Activated CD4-positive, alpha-beta memory T cell treated with anti-CD3 and anti-CD28 coated beads for 36 hours (primary cell): ENCODE measurements at regions of chr21 and their contacts with region 1.

Region 1: DNA sequence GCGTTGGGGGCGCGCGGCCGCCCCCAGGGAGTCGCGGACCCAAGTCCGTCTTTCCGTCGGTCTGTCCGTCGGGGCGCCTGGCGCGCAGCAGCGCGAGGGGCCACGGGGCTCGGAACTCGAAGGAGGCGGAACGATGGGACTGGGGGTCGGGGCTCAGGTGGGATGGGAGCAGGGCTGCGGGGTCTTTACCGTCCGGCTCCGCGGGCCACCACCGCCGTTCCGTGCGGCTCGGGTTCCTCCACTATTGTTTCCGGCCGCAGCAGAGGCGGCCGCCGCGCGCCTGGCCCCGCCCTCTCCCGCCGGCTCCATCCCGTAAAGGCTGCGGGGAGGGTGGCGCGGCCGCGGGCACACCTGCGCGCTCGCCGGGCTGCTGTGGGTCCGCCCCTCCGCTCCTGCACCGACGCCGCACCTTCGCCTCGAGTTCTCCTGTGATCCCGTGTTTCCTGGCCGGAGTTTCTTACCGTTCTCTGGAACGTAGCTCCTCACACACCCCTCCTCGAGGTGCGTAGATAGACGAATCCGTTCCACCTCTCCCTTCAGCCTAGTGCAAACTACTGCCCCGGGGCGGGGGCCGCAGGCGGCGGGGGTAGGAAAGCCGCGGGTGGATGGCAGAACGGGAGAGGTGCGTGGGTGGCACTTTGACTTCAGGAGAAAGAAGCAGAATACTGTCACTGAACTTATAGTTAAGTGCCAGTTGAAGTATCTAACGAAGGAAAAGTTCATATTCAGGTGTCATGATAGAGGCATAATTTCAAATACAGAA is at the start of gene C21orf91:
- DNase-seq: peak; percentile 92
- H3K4me3 Mint-ChIP-seq: peak within 1 kb of the TSS; percentile 84
- H3K27ac Mint-ChIP-seq: peak within 1 kb of the TSS; percentile 98
- H3K4me1 Mint-ChIP-seq: peaks cover 45% of the 10 kb centered on the region
- H3K27me3 Mint-ChIP-seq: no peaks in the 10 kb centered on the region
- total RNA-seq, gene C21orf91: 23.6 to 24.1 TPM

Region 2: GRCh38 chr21:17512253-17513213 is 306.8 kb before region 1 on chr21 and contains the start of gene CXADR:
- CTCF ChIA-PET with region 1: no interaction called
- POLR2A ChIA-PET with region 1: no interaction called
- intact Hi-C with region 1: loop called (anchors 5 kb)
- DNase-seq: peak; percentile 83
- H3K4me3 Mint-ChIP-seq: peak within 1 kb of the TSS; percentile 77
- H3K27ac Mint-ChIP-seq: no peak within 1 kb of the TSS
- H3K4me1 Mint-ChIP-seq: peaks cover 14% of the 10 kb centered on the region
- H3K27me3 Mint-ChIP-seq: peaks cover 14% of the 10 kb centered on the region
- total RNA-seq, gene CXADR: 0.29 to 0.75 TPM

Region 3: GRCh38 chr21:17688912-17689874 is 130.1 kb before region 1 on chr21:
- CTCF ChIA-PET with region 1: interaction called, 8 read pairs
- POLR2A ChIA-PET with region 1: no interaction called
- intact Hi-C with region 1: loop called (anchors 5 kb)
- DNase-seq: peak; percentile 71
- H3K4me3 Mint-ChIP-seq: no peak overlapping the region
- H3K27ac Mint-ChIP-seq: no peak overlapping the region
- H3K4me1 Mint-ChIP-seq: peaks cover 32% of the 10 kb centered on the region
- H3K27me3 Mint-ChIP-seq: no peaks in the 10 kb centered on the region

Region 4: DNA sequence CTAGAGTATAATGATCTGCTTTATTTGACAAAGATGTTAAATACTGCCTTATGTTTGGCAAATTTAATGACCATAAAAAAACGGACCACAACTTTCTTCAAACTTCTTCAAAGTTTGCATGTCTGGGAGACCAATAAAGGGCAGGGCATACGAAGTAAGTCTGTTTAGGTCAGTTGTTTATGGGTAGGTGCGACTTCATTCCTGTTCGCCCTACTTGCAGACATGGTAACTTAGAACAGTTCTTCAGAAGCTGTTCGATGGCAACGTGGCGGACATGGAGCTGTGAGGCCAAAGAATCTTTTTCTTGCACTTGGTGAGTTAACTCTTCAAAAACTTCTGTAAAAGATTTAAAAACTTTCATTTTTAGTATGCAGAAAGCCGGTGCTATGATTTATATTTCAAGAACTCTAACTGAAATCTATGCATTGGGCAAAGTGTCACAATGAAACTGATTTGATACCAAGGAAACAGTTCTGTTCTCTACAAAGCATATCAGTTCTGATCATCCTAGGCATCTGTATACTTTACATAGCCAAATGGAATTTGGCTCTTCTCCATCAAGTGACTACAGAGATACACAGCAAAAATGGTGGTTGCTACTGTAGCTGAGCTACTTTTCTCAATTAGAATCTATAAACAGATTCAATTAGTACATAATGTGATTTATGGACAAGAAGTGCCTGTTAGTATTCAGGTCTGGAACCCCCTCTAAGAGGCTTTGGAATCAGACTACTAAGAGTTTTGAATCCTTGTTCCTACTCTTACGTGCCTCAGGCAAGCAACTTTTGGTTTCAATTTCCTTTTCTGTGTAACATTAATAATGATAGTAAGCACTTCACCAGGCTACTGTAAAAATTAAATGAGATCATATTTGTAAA is 25.8 kb before region 1 on chr21:
- CTCF ChIA-PET with region 1: interaction called, 3 read pairs
- POLR2A ChIA-PET with region 1: interaction called, 7 read pairs
- intact Hi-C with region 1: loop called (anchors 1 kb)
- DNase-seq: peak; percentile 30
- H3K4me3 Mint-ChIP-seq: peak overlapping the region; percentile 59
- H3K27ac Mint-ChIP-seq: peak overlapping the region; percentile 86
- H3K4me1 Mint-ChIP-seq: peaks cover 72% of the 10 kb centered on the region
- H3K27me3 Mint-ChIP-seq: no peaks in the 10 kb centered on the region

Region 5: DNA sequence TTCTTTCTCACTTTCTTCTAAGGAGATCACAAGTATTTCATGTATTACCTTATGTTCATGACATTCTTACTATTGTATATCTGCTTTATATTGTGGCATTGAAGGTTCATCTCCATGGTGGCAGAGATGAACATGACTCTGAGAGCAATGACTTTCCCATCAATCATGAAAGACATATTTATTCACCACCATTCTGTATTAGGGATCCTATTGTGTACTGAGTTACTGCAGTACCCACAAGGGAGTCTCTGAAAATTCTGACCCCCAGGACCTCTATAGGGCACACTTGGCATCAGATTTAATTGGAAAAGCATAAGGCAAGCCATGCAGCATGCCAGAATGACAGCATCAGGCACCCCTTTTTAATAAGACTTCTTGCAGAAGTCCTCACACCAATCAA is 21.8 kb after region 1 on chr21:
- CTCF ChIA-PET with region 1: no interaction called
- POLR2A ChIA-PET with region 1: no interaction called
- intact Hi-C with region 1: no loop called
- DNase-seq: no peak
- H3K4me3 Mint-ChIP-seq: no peak overlapping the region
- H3K27ac Mint-ChIP-seq: no peak overlapping the region
- H3K4me1 Mint-ChIP-seq: no peaks in the 10 kb centered on the region
- H3K27me3 Mint-ChIP-seq: peaks cover 2% of the 10 kb centered on the region

Region 6: DNA sequence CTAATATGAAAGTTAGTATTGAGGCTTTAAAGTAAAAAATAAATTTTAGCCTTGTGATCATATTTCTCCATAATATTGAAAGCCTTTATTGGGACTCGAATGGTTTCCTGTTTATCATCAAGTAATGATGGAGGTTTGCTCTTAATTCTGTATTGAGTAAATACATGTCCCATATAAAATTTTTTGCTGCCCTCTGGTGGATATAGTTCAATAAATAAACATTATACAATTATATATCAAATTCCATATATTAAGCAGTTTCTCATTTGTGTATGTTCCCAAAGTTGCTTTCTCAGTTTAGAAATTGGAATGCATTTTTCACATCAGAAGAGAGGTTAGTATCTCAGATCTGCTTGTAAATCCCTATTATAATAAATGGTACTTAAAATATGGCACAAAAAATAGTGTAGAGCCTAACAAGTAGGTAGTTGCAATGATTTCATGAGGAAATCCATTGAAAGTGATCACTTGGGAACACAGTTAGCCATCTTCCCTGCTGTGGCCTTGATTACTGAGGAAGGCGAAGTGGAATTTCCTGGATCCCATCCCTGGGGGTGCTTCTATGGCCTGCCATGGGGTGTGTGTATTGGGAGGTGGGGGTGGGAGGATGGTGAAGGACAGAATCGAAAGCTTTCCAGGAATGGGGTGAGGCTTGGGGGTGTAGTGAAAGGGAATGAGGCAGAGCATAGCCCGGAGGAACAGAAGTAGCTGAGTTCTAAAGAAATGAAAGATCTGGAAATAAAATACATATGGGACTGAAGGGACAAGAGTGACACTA is 83.9 kb after region 1 on chr21:
- CTCF ChIA-PET with region 1: no interaction called
- POLR2A ChIA-PET with region 1: no interaction called
- intact Hi-C with region 1: loop called (anchors 5 kb)
- DNase-seq: no peak
- H3K4me3 Mint-ChIP-seq: no peak overlapping the region
- H3K27ac Mint-ChIP-seq: no peak overlapping the region
- H3K4me1 Mint-ChIP-seq: peaks cover 6% of the 10 kb centered on the region
- H3K27me3 Mint-ChIP-seq: no peaks in the 10 kb centered on the region

Region 7: DNA sequence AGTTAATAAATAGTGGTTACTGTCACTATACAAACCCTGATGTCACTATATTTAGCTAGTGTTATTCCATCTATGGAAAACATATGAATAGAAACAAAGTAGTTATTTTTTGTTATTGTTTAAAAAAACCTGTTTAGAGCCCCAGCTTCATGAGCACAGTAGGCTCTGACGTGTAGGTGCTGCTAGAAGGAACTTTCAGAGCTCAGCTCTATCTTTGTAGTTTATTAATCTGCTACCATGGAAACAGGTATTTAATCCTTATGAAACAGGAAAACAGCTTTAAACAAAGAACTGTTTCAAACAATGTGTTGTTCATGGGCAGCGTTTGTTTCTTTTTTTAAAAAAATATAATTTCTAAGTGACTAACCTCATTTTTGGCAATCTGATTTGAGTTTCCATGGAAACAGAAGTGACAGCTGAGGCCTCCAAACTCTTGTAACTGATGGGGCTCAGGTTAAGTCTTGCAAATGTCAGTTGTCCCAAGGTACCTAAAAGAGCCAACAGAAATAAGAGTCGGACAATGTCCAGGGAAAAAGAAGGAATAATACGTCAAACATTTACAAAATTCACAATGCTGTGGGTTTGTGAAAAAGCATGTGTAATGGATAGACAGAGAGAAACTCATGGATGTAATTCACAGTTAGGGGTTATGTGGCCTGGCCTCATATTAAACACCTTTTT is 161.9 kb after region 1 on chr21:
- CTCF ChIA-PET with region 1: no interaction called
- POLR2A ChIA-PET with region 1: no interaction called
- intact Hi-C with region 1: no loop called
- DNase-seq: no peak
- H3K4me3 Mint-ChIP-seq: no peak overlapping the region
- H3K27ac Mint-ChIP-seq: no peak overlapping the region
- H3K4me1 Mint-ChIP-seq: no peaks in the 10 kb centered on the region
- H3K27me3 Mint-ChIP-seq: no peaks in the 10 kb centered on the region